Caco-2 (cell line): ENCODE measurements at regions of chr11 and their contacts with region 1.

Region 1: GRCh38 chr11:102268329-102269193 is 48.7 kb upstream of the BIRC3 start:
- DNase-seq: peak; percentile 97 to 98
- H3K4me3 ChIP-seq: peak overlapping the region; percentile 67
- H3K4me3 Mint-ChIP-seq: peak overlapping the region; percentile 90
- H3K27ac Mint-ChIP-seq: peak overlapping the region; percentile 79
- H3K4me1 ChIP-seq: peaks cover 33% of the 10 kb centered on the region
- H3K4me1 Mint-ChIP-seq: peaks cover 33% of the 10 kb centered on the region
- H3K27me3 ChIP-seq: no peaks in the 10 kb centered on the region
- H3K27me3 Mint-ChIP-seq: no peaks in the 10 kb centered on the region
- CTCF ChIP-seq: peak; percentile 61 to 97

Region 2: GRCh38 chr11:102109896-102110760 is 158.4 kb before region 1 on chr11 and contains the start of gene YAP1:
- CTCF ChIA-PET with region 1: interaction called, 9 read pairs
- POLR2A ChIA-PET with region 1: no interaction called
- intact Hi-C with region 1: loop called (anchors 1 kb)
- DNase-seq: peak; percentile 97 to 99
- H3K4me3 ChIP-seq: peak within 1 kb of the TSS; percentile 96
- H3K4me3 Mint-ChIP-seq: peak within 1 kb of the TSS; percentile 91
- H3K27ac Mint-ChIP-seq: peak within 1 kb of the TSS; percentile 98
- H3K4me1 ChIP-seq: peaks cover 20% of the 10 kb centered on the region
- H3K4me1 Mint-ChIP-seq: peaks cover 16% of the 10 kb centered on the region
- H3K27me3 ChIP-seq: no peaks in the 10 kb centered on the region
- H3K27me3 Mint-ChIP-seq: no peaks in the 10 kb centered on the region
- CTCF ChIP-seq: no peak
- total RNA-seq, gene YAP1: 207 and 227 TPM in 2 replicates

Region 3: GRCh38 chr11:102229510-102230123 is 38.9 kb before region 1 on chr11:
- CTCF ChIA-PET with region 1: interaction called, 25 read pairs
- POLR2A ChIA-PET with region 1: interaction called, 5 read pairs
- intact Hi-C with region 1: no loop called
- DNase-seq: peak; percentile 58 to 68
- H3K4me3 ChIP-seq: no peak overlapping the region
- H3K4me3 Mint-ChIP-seq: peak overlapping the region; percentile 13
- H3K27ac Mint-ChIP-seq: peak overlapping the region; percentile 1
- H3K4me1 ChIP-seq: peaks cover 44% of the 10 kb centered on the region
- H3K4me1 Mint-ChIP-seq: peaks cover 44% of the 10 kb centered on the region
- H3K27me3 ChIP-seq: no peaks in the 10 kb centered on the region
- H3K27me3 Mint-ChIP-seq: no peaks in the 10 kb centered on the region
- CTCF ChIP-seq: peak in 1 of 2 experiments; percentile 9

Region 4: DNA sequence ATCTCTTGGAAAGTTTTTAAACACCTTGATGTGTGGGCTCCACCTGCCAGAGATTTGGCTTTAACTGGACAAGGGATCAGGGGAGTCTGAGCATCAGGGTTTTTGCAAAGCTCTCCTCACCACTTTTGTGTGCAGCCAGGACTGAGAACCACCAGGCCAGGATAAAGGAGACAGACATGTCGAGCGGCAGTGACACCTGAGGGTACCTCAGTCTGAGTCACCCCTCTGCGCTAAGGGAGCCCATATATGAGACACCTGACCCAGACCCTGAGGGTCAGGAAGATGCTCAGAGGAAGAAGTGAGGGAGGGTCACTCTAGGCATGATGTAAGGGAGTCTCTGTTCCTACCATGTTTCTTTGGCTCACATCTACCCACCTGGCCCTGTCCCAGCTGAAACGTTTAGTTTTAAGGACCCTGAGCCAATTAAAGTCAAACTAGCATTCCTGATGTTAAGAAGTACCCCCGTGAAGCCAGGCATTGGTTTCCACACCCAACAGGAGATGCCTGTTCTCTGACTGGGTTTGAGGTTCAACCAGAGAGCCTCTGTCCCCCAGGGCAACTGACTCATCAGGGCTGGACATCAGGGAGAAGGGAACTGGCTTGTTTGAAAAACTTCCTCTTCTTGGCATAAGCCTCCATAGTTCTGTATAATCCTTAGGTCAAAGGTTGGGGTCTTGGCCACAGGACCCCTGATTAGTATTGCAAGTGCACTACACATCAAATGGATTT is 23.7 kb before region 1 on chr11:
- CTCF ChIA-PET with region 1: interaction called, 15 read pairs
- POLR2A ChIA-PET with region 1: no interaction called
- intact Hi-C with region 1: no loop called
- DNase-seq: no peak
- H3K4me3 ChIP-seq: no peak overlapping the region
- H3K4me3 Mint-ChIP-seq: no peak overlapping the region
- H3K27ac Mint-ChIP-seq: no peak overlapping the region
- H3K4me1 ChIP-seq: no peaks in the 10 kb centered on the region
- H3K4me1 Mint-ChIP-seq: no peaks in the 10 kb centered on the region
- H3K27me3 ChIP-seq: no peaks in the 10 kb centered on the region
- H3K27me3 Mint-ChIP-seq: no peaks in the 10 kb centered on the region
- CTCF ChIP-seq: no peak

Region 5: GRCh38 chr11:102287964-102288724 is 19.6 kb after region 1 on chr11:
- CTCF ChIA-PET with region 1: interaction called, 15 read pairs
- POLR2A ChIA-PET with region 1: no interaction called
- intact Hi-C with region 1: loop called (anchors 1 kb)
- DNase-seq: peak; percentile 66 to 78
- H3K4me3 ChIP-seq: no peak overlapping the region
- H3K4me3 Mint-ChIP-seq: peak overlapping the region; percentile 1
- H3K27ac Mint-ChIP-seq: no peak overlapping the region
- H3K4me1 ChIP-seq: peaks cover 12% of the 10 kb centered on the region
- H3K4me1 Mint-ChIP-seq: peaks cover 7% of the 10 kb centered on the region
- H3K27me3 ChIP-seq: no peaks in the 10 kb centered on the region
- H3K27me3 Mint-ChIP-seq: no peaks in the 10 kb centered on the region
- CTCF ChIP-seq: peak; percentile 84

Region 6: DNA sequence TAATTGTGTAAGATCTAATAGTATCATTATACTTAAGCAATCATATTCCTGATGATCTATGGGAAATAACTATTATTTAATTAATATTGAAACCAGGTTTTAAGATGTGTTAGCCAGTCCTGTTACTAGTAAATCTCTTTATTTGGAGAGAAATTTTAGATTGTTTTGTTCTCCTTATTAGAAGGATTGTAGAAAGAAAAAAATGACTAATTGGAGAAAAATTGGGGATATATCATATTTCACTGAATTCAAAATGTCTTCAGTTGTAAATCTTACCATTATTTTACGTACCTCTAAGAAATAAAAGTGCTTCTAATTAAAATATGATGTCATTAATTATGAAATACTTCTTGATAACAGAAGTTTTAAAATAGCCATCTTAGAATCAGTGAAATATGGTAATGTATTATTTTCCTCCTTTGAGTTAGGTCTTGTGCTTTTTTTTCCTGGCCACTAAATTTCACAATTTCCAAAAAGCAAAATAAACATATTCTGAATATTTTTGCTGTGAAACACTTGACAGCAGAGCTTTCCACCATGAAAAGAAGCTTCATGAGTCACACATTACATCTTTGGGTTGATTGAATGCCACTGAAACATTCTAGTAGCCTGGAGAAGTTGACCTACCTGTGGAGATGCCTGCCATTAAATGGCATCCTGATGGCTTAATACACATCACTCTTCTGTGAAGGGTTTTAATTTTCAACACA is 55.1 kb after region 1 on chr11:
- CTCF ChIA-PET with region 1: no interaction called
- POLR2A ChIA-PET with region 1: no interaction called
- intact Hi-C with region 1: no loop called
- DNase-seq: no peak
- H3K4me3 ChIP-seq: no peak overlapping the region
- H3K4me3 Mint-ChIP-seq: no peak overlapping the region
- H3K27ac Mint-ChIP-seq: no peak overlapping the region
- H3K4me1 ChIP-seq: no peaks in the 10 kb centered on the region
- H3K4me1 Mint-ChIP-seq: peaks cover 1% of the 10 kb centered on the region
- H3K27me3 ChIP-seq: no peaks in the 10 kb centered on the region
- H3K27me3 Mint-ChIP-seq: no peaks in the 10 kb centered on the region
- CTCF ChIP-seq: no peak

Region 7: DNA sequence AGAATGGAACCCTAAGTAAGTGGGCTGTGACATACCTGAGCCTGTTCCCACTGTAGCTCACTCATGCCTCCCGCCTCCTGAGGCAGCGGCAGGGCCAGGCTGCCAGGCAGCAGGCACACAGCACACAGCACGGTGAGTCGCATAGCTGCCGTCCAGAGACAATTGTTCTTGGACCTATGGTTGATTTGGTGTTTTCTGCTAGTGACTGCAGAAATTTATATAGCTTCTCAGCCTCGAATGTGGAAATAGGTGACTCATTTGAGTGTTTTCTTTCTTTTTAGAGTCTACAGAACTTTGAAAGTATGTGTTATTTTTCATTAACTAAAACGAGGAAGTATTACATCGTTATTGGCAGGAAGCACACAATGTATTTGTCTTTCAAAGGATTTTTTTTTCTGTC is 262.0 kb after region 1 on chr11 and contains the start of gene MMP7:
- CTCF ChIA-PET with region 1: interaction called, 10 read pairs
- POLR2A ChIA-PET with region 1: no interaction called
- intact Hi-C with region 1: no loop called
- DNase-seq: no peak
- H3K4me3 ChIP-seq: no peak within 1 kb of the TSS
- H3K4me3 Mint-ChIP-seq: no peak within 1 kb of the TSS
- H3K27ac Mint-ChIP-seq: no peak within 1 kb of the TSS
- H3K4me1 ChIP-seq: peaks cover 14% of the 10 kb centered on the region
- H3K4me1 Mint-ChIP-seq: peaks cover 14% of the 10 kb centered on the region
- H3K27me3 ChIP-seq: no peaks in the 10 kb centered on the region
- H3K27me3 Mint-ChIP-seq: no peaks in the 10 kb centered on the region
- CTCF ChIP-seq: no peak
- total RNA-seq, gene MMP7: 1.0 TPM in 1 of 2 replicates, not detected in the other